Caco-2 (cell line): ENCODE measurements at regions of chr6 and their contacts with region 1.

Region 1: DNA sequence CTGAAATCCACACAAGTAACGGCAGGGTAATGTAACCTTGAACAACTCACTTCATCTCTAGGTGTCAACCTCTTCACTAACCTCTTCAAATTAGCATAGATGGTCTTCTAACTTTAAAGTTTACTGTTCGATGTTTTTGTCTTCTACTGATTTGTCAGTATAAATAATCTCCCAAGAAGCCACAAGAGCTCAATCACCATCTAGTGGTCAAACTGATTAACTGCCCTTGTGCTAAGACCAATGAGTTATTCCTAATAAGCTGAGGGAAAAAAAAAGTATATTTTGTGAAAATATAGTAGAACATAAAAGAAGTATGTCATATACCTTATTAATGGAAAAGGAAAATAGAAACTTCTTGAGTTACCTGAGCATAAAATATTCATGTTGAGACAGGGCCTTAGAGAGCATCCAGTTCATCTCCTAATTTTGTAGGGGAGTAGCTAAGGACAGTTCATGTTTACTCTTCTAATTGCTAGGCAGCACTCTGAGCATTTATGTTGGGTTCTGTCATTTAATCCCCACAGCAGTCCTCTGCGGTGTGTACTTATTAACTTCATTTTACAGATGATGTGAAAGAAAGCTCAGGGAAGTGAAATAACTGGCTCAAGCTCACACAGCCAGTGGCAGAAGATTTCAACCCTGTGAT is 317.1 kb downstream of the ESR1 start:
- DNase-seq: peak in 1 of 2 experiments; percentile 13
- H3K4me3 ChIP-seq: no peak overlapping the region
- H3K4me3 Mint-ChIP-seq: no peak overlapping the region
- H3K27ac Mint-ChIP-seq: no peak overlapping the region
- H3K4me1 ChIP-seq: no peaks in the 10 kb centered on the region
- H3K4me1 Mint-ChIP-seq: no peaks in the 10 kb centered on the region
- H3K27me3 ChIP-seq: no peaks in the 10 kb centered on the region
- H3K27me3 Mint-ChIP-seq: no peaks in the 10 kb centered on the region
- CTCF ChIP-seq: peak; percentile 61 to 68

Region 2: GRCh38 chr6:151413372-151414145 is 711.0 kb before region 1 on chr6:
- CTCF ChIA-PET with region 1: no interaction called
- POLR2A ChIA-PET with region 1: no interaction called
- intact Hi-C with region 1: no loop called
- DNase-seq: no peak
- H3K4me3 ChIP-seq: no peak overlapping the region
- H3K4me3 Mint-ChIP-seq: no peak overlapping the region
- H3K27ac Mint-ChIP-seq: no peak overlapping the region
- H3K4me1 ChIP-seq: no peaks in the 10 kb centered on the region
- H3K4me1 Mint-ChIP-seq: no peaks in the 10 kb centered on the region
- H3K27me3 ChIP-seq: no peaks in the 10 kb centered on the region
- H3K27me3 Mint-ChIP-seq: no peaks in the 10 kb centered on the region
- CTCF ChIP-seq: no peak

Region 3: GRCh38 chr6:151440930-151441329 is 683.6 kb before region 1 on chr6:
- CTCF ChIA-PET with region 1: no interaction called
- POLR2A ChIA-PET with region 1: no interaction called
- intact Hi-C with region 1: loop called (anchors 10 kb)
- DNase-seq: no peak
- H3K4me3 ChIP-seq: no peak overlapping the region
- H3K4me3 Mint-ChIP-seq: no peak overlapping the region
- H3K27ac Mint-ChIP-seq: peak overlapping the region; percentile 16
- H3K4me1 ChIP-seq: peaks cover 45% of the 10 kb centered on the region
- H3K4me1 Mint-ChIP-seq: peaks cover 12% of the 10 kb centered on the region
- H3K27me3 ChIP-seq: no peaks in the 10 kb centered on the region
- H3K27me3 Mint-ChIP-seq: no peaks in the 10 kb centered on the region
- CTCF ChIP-seq: peak; percentile 32 to 37

Region 4: GRCh38 chr6:151675746-151676416 is 448.7 kb before region 1 on chr6:
- CTCF ChIA-PET with region 1: interaction called, 3 read pairs
- POLR2A ChIA-PET with region 1: no interaction called
- intact Hi-C with region 1: loop called (anchors 2 kb)
- DNase-seq: peak; percentile 56 to 69
- H3K4me3 ChIP-seq: no peak overlapping the region
- H3K4me3 Mint-ChIP-seq: no peak overlapping the region
- H3K27ac Mint-ChIP-seq: peak overlapping the region; percentile 5
- H3K4me1 ChIP-seq: no peaks in the 10 kb centered on the region; the same call in 1 of the 2 replicates
- H3K4me1 Mint-ChIP-seq: peaks cover 14% of the 10 kb centered on the region
- H3K27me3 ChIP-seq: no peaks in the 10 kb centered on the region
- H3K27me3 Mint-ChIP-seq: no peaks in the 10 kb centered on the region
- CTCF ChIP-seq: peak; percentile 85 to 91

Region 5: DNA sequence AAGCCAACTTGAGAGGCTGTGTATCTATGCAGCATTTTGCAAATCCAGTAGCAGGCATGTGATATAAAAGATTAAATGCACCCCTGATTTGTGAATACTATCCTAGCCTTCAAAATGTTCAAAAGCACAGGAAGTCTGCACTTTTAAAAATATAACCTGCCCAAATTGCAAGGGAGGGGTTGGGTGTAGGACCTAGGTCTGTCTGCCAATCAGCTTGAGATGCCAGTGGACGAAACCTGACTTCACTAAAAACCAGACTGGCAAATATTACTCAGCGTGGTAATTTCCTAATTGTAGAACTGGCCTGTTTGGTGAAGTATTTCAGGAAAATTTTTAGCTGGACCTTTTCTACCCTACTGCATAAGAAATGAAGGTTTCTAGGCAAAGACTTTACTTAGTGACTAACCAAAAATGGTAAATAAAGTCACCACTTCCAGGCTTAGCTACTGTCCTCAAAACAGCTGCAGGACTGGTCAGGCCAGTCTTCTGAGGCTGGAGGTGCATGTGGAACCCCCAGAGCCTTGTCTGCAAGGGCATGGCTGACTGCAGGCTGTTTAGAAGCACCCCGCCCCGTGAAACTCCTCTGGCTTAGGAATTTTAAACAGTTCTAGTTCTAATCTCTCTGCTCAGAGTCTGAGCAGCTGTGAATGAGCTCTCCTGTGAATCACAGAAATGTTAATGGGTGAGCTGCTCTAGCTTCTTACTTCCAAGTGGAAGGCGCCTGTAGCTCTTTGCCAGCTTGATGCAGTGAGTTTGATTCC is 421.5 kb before region 1 on chr6:
- CTCF ChIA-PET with region 1: no interaction called
- POLR2A ChIA-PET with region 1: no interaction called
- intact Hi-C with region 1: no loop called
- DNase-seq: no peak
- H3K4me3 ChIP-seq: no peak overlapping the region
- H3K4me3 Mint-ChIP-seq: no peak overlapping the region
- H3K27ac Mint-ChIP-seq: peak overlapping the region; percentile 28
- H3K4me1 ChIP-seq: peaks cover 21% of the 10 kb centered on the region
- H3K4me1 Mint-ChIP-seq: peaks cover 10% of the 10 kb centered on the region
- H3K27me3 ChIP-seq: no peaks in the 10 kb centered on the region
- H3K27me3 Mint-ChIP-seq: no peaks in the 10 kb centered on the region
- CTCF ChIP-seq: no peak

Region 6: DNA sequence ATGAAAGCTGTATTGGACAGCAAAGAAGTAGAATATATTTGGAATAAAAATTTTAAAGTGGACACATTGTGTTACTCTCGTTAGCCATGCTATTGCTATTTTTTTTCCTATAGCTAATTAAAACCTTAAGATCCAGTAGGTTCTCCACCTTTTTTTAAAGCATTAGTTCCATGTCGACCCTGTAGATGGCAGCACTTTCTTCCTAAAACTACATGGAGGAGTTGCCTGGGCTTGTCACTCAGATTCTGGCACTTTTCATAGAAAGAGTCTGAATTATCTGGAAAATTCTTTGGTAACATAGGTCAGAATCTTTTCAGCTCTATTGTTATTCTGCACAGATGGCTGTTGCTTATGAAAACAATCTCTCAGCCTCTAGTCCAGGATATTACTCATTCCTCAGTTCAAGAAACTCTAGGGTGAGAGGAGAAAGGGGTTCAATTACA is 359.1 kb before region 1 on chr6:
- CTCF ChIA-PET with region 1: interaction called, 12 read pairs
- POLR2A ChIA-PET with region 1: no interaction called
- intact Hi-C with region 1: loop called (anchors 1 kb)
- DNase-seq: peak; percentile 48 to 66
- H3K4me3 ChIP-seq: no peak overlapping the region
- H3K4me3 Mint-ChIP-seq: no peak overlapping the region
- H3K27ac Mint-ChIP-seq: no peak overlapping the region
- H3K4me1 ChIP-seq: peaks cover 3% of the 10 kb centered on the region; the same call in 1 of the 2 replicates
- H3K4me1 Mint-ChIP-seq: peaks cover 13% of the 10 kb centered on the region
- H3K27me3 ChIP-seq: no peaks in the 10 kb centered on the region
- H3K27me3 Mint-ChIP-seq: peaks cover 8% of the 10 kb centered on the region
- CTCF ChIP-seq: peak; percentile 61 to 69

Region 7: GRCh38 chr6:152070556-152070955 is 54.0 kb before region 1 on chr6:
- CTCF ChIA-PET with region 1: interaction called, 11 read pairs
- POLR2A ChIA-PET with region 1: no interaction called
- intact Hi-C with region 1: no loop called
- DNase-seq: peak in 1 of 2 experiments; percentile 35
- H3K4me3 ChIP-seq: no peak overlapping the region
- H3K4me3 Mint-ChIP-seq: no peak overlapping the region
- H3K27ac Mint-ChIP-seq: no peak overlapping the region
- H3K4me1 ChIP-seq: no peaks in the 10 kb centered on the region
- H3K4me1 Mint-ChIP-seq: no peaks in the 10 kb centered on the region
- H3K27me3 ChIP-seq: no peaks in the 10 kb centered on the region
- H3K27me3 Mint-ChIP-seq: peaks cover 10% of the 10 kb centered on the region
- CTCF ChIP-seq: peak; percentile 9 to 33

Region 8: GRCh38 chr6:152151920-152152319 is 27.4 kb after region 1 on chr6:
- CTCF ChIA-PET with region 1: no interaction called
- POLR2A ChIA-PET with region 1: no interaction called
- intact Hi-C with region 1: no loop called
- DNase-seq: no peak
- H3K4me3 ChIP-seq: no peak overlapping the region
- H3K4me3 Mint-ChIP-seq: no peak overlapping the region
- H3K27ac Mint-ChIP-seq: no peak overlapping the region
- H3K4me1 ChIP-seq: no peaks in the 10 kb centered on the region
- H3K4me1 Mint-ChIP-seq: no peaks in the 10 kb centered on the region
- H3K27me3 ChIP-seq: no peaks in the 10 kb centered on the region
- H3K27me3 Mint-ChIP-seq: no peaks in the 10 kb centered on the region
- CTCF ChIP-seq: no peak